H1 (cell line): ENCODE measurements at regions of chr3 and their contacts with region 1.

Region 1: DNA sequence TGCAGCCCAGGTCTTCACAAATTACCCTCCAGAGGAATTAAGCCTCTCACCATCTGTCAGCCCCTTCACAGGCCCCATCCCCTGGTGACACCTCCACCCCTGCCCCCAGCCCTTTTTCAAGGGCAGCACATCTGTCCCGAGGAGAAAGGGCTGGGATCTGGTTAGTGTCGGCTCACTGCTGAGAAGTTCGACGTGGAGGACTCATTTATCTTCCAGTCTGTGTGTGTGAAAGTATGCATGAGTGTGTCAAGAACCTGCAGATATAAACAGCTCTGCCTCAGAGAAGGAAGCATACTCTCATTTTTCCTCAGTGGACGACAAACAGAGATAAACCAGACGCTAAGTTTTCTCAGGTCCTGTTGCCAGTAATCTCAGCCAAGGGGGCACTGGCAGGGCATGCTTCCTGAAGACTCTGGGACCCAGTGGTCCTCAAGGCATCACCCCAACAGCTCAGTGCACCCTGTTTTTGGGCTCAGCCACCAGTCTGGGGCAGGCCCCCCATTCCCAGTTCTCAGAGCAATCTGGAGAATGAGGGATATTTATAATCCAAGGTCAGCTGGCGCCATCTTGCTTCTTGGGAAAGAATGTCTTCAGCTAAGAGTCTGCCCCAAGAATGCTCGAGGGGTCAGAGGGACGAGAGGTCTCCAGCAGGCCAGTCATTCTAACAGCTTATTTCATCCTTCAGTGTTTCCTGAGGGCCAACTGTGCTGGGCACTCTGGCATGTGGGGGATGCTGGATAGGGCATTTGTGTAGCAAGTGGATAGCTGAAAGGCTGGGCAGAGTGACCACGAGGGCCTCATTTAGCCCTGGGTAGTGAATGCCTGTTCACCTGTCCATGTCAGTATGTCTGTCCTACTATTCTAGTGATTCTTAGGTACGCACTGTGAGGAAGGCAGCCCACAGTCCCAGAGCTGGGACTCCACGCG is 73.6 kb downstream of the ADCY5 start:
- DNase-seq: no peak
- H3K4me3 ChIP-seq: no peak overlapping the region
- H3K27ac ChIP-seq: no peak overlapping the region
- H3K4me1 ChIP-seq: peaks cover 0 to 4% (median 0%) of the 10 kb centered on the region in 4 experiments; a peak in 1 of 7 replicates
- H3K27me3 ChIP-seq: peaks cover 0 to 2% (median 0%) of the 10 kb centered on the region in 4 experiments; a peak in 1 of 7 replicates
- CTCF ChIP-seq: peak; percentile 29 to 67 (median 54)
- EP300 ChIP-seq: no peak
- POLR2A ChIP-seq: no peak
- RAD21 ChIP-seq: peak; percentile 77 to 84

Region 2: DNA sequence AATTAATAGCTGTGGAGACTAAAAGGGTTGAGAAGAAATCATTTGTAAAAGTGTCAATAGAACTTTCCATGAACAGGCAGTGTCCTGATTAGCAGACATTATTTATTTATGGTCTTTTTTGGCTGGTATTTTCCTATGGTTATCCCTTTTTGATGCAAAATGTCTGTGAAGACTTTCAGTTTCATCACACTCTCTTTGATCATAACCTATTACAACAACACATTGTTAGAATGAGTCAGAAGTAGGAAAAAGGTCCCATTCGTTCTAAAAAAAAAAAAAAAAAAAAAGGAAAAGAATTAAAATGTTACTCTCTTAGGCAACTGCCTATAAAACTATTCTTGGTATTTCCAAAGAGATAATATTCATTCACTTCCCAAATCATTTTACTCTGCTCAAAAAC is 518.3 kb before region 1 on chr3:
- CTCF ChIA-PET with region 1: no interaction called
- POLR2A ChIA-PET with region 1: no interaction called
- DNase-seq: no peak
- H3K4me3 ChIP-seq: no peak overlapping the region
- H3K27ac ChIP-seq: no peak overlapping the region
- H3K4me1 ChIP-seq: no peaks in the 10 kb centered on the region
- H3K27me3 ChIP-seq: no peaks in the 10 kb centered on the region
- CTCF ChIP-seq: no peak
- EP300 ChIP-seq: no peak
- POLR2A ChIP-seq: no peak
- RAD21 ChIP-seq: no peak

Region 3: DNA sequence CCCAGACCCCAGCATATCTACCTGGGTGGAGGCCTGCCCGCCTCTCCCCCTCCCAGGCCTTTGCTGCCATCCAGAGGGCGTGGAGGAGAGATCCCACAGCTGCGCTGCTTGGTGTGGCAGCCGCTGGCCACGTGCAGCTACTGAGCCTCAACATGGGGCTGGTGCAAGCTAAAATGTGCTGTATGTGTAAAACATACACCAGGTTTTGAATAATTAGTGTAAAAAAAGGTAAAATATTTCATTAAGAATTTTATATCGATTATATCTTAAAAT is 77.7 kb before region 1 on chr3:
- CTCF ChIA-PET with region 1: interaction called, 10 read pairs
- POLR2A ChIA-PET with region 1: no interaction called
- DNase-seq: no peak
- H3K4me3 ChIP-seq: no peak overlapping the region
- H3K27ac ChIP-seq: no peak overlapping the region
- H3K4me1 ChIP-seq: peaks cover 0 to 2% (median 0%) of the 10 kb centered on the region in 4 experiments; a peak in 1 of 7 replicates
- H3K27me3 ChIP-seq: no peaks in the 10 kb centered on the region
- CTCF ChIP-seq: peak in 2 of 3 experiments; percentile 31 to 51; a peak in 3 of 4 replicates
- EP300 ChIP-seq: no peak
- POLR2A ChIP-seq: no peak
- RAD21 ChIP-seq: peak; percentile 66 to 76

Region 4: GRCh38 chr3:123344175-123344906 is 30.9 kb before region 1 on chr3:
- CTCF ChIA-PET with region 1: interaction called, 27 read pairs
- POLR2A ChIA-PET with region 1: no interaction called
- DNase-seq: no peak
- H3K4me3 ChIP-seq: no peak overlapping the region
- H3K27ac ChIP-seq: no peak overlapping the region
- H3K4me1 ChIP-seq: peaks cover 5 to 17% (median 9%) of the 10 kb centered on the region in 4 experiments; a peak in 6 of 7 replicates
- H3K27me3 ChIP-seq: no peaks in the 10 kb centered on the region
- CTCF ChIP-seq: no peak
- EP300 ChIP-seq: no peak
- POLR2A ChIP-seq: no peak
- RAD21 ChIP-seq: no peak

Region 5: DNA sequence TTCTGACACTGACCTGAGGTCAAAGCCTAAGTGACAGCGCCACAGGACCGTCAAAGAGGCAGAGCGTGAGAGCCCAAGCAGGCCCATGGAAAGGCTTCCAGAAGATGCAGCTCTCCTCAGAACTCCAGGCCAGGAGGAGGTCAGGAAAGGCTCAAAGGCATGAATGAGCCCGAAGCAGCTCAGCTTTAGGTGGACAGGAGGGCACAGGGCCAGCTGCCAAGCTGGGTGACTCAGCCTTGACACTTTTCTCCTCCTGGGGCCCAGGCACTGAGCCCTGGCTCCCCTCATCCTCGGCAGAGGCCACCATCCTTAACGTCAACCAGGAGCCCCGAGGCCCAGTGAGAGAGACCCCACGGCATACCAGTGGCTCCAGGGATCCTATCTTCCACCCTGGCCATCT is 10.7 kb after region 1 on chr3:
- CTCF ChIA-PET with region 1: interaction called, 63 read pairs
- POLR2A ChIA-PET with region 1: interaction called, 4 read pairs
- DNase-seq: no peak
- H3K4me3 ChIP-seq: no peak overlapping the region
- H3K27ac ChIP-seq: no peak overlapping the region
- H3K4me1 ChIP-seq: peaks cover 4 to 10% (median 9%) of the 10 kb centered on the region in 4 experiments
- H3K27me3 ChIP-seq: no peaks in the 10 kb centered on the region
- CTCF ChIP-seq: no peak
- EP300 ChIP-seq: no peak
- POLR2A ChIP-seq: no peak
- RAD21 ChIP-seq: no peak